ENCODE measurements at regions of chr22 and their contacts with region 1.

Region 1: DNA sequence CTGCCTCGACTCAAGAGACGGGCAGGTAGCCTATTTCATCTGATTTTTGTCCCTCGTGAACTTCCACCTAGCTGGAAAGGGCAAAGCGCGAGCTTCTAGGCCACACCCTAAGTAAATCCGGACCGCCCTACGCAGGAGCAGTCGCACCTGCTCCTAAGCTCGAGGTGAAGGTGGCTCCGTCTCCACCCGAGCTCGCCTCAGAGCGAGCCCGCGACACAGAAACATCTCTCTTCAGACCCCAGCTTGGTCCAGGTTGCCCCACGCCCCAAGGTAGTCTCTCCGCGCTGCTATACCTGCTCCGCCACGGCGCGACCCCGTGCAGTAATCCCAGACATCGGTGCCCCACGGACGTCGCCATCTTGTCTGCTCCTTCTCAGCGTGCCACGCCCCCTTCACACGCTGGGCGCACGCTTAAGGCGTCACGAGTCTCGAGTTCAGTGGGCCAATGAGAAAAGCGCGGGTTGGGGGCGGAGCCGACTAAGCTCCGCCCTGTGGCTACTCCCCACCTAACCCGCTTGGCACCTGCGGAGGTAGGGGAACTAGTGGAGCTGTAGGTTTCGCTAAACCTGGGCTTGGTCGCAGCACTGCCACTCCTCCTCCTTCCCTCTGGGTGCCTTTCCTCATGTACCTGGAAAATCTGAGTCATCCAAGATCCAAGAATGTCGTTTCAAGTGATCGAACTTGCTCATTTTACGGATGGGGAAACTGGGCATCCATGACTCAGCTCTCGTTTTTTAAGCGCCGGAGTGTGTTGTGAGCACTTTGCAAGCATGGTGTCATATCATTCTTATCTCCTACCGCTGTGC is at the start of gene PISD:
- DNase-seq: peak; percentile 96 to 99
- ATAC-seq: peak; percentile 96 to 100 (median 99)
- H3K4me3 ChIP-seq: peak within 1 kb of the TSS; percentile 84
- H3K4me3 Mint-ChIP-seq: peak within 1 kb of the TSS; percentile 100
- H3K27ac ChIP-seq: peak within 1 kb of the TSS; percentile 51
- H3K27ac Mint-ChIP-seq: peak within 1 kb of the TSS; percentile 98 to 99
- H3K4me1 ChIP-seq: peaks cover 28% of the 10 kb centered on the region
- H3K4me1 Mint-ChIP-seq: peaks cover 24 to 25% of the 10 kb centered on the region in 2 donors
- H3K27me3 ChIP-seq: no peaks in the 10 kb centered on the region
- H3K27me3 Mint-ChIP-seq: no peaks in the 10 kb centered on the region
- CTCF ChIP-seq: no peak
- total RNA-seq, gene PISD: 36.0 to 52.1 (median 47.8) TPM

Region 2: DNA sequence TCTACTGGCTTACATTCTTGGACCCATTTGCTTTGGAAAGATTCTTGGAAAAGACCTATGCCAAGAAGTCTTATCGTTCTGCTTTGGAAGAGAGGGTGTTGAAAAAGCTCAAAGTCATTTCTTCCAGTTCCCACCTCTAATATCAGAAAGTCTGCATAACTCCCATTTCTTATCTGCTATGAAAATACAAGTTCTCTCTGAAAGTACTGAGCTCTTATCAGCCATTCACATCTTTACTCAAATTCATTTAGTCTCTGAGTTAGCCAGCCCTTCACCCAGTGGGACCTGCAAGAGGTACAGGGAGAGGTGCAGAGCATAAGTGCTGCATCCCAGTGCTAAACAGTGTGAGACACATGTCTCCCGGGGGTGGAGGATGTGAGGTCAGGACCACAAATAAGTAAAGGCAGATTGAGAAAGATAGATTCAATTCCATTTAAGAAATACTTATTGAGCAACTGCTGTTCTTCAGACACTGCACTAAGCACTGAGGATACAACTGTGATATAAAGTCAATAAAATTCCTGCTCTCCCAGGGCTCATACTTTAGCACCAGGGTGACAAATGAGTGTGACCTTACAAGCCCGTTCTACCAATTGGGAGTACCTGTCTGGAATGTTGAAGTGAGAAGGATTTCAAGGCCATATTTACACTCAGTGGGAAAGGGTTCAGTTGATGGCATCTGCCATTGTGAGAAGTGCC is 76.7 kb before region 1 on chr22:
- intact Hi-C with region 1: no loop called
- DNase-seq: peak in 1 of 2 donors; percentile 19
- ATAC-seq: no peak
- H3K4me3 ChIP-seq: no peak overlapping the region
- H3K4me3 Mint-ChIP-seq: no peak overlapping the region
- H3K27ac ChIP-seq: no peak overlapping the region
- H3K27ac Mint-ChIP-seq: no peak overlapping the region
- H3K4me1 ChIP-seq: peaks cover 2% of the 10 kb centered on the region
- H3K4me1 Mint-ChIP-seq: peaks cover 0 to 10% of the 10 kb centered on the region in 2 donors
- H3K27me3 ChIP-seq: no peaks in the 10 kb centered on the region
- H3K27me3 Mint-ChIP-seq: no peaks in the 10 kb centered on the region
- CTCF ChIP-seq: no peak

Region 3: DNA sequence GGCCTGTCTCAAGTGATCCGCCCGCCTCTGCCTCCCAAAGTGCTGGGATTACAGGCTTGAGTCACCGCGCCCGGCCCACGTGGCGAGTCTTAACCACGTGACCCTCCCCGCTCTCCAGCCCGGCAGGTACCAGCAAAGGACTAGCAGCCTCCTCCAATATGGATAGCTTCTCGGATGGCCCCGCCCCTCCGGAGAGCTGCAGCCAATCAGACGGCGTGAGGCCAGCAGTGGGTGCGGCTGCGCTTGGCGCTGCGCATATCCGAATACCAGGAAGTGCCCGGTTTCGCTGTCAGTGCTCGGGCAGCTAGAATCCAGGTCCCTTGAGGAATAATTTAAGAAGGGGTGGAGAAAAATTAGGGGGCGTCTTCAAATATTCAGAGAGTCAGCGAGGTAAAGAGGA is 14.6 kb after region 1 on chr22:
- intact Hi-C with region 1: loop called (anchors 1 kb)
- DNase-seq: peak; percentile 89 to 94
- ATAC-seq: peak; percentile 100
- H3K4me3 ChIP-seq: peak overlapping the region; percentile 46
- H3K4me3 Mint-ChIP-seq: peak overlapping the region; percentile 100
- H3K27ac ChIP-seq: peak overlapping the region; percentile 60
- H3K27ac Mint-ChIP-seq: peak overlapping the region; percentile 92 to 97
- H3K4me1 ChIP-seq: peaks cover 11% of the 10 kb centered on the region
- H3K4me1 Mint-ChIP-seq: peaks cover 12 to 18% of the 10 kb centered on the region in 2 donors
- H3K27me3 ChIP-seq: no peaks in the 10 kb centered on the region
- H3K27me3 Mint-ChIP-seq: no peaks in the 10 kb centered on the region
- CTCF ChIP-seq: no peak

Region 4: GRCh38 chr22:31749636-31750364 is 87.7 kb after region 1 on chr22 and contains the start of gene PRR14L:
- intact Hi-C with region 1: loop called (anchors 2 kb)
- DNase-seq: peak; percentile 97 to 99
- ATAC-seq: peak; percentile 76 to 93 (median 79)
- H3K4me3 ChIP-seq: peak within 1 kb of the TSS; percentile 92
- H3K4me3 Mint-ChIP-seq: peak within 1 kb of the TSS; percentile 98
- H3K27ac ChIP-seq: peak within 1 kb of the TSS; percentile 81
- H3K27ac Mint-ChIP-seq: peak within 1 kb of the TSS; percentile 87 to 89
- H3K4me1 ChIP-seq: peaks cover 42% of the 10 kb centered on the region
- H3K4me1 Mint-ChIP-seq: peaks cover 47 to 56% of the 10 kb centered on the region in 2 donors
- H3K27me3 ChIP-seq: no peaks in the 10 kb centered on the region
- H3K27me3 Mint-ChIP-seq: no peaks in the 10 kb centered on the region
- CTCF ChIP-seq: no peak
- total RNA-seq, gene PRR14L: 39.3 to 54.1 (median 54.0) TPM

Region 5: DNA sequence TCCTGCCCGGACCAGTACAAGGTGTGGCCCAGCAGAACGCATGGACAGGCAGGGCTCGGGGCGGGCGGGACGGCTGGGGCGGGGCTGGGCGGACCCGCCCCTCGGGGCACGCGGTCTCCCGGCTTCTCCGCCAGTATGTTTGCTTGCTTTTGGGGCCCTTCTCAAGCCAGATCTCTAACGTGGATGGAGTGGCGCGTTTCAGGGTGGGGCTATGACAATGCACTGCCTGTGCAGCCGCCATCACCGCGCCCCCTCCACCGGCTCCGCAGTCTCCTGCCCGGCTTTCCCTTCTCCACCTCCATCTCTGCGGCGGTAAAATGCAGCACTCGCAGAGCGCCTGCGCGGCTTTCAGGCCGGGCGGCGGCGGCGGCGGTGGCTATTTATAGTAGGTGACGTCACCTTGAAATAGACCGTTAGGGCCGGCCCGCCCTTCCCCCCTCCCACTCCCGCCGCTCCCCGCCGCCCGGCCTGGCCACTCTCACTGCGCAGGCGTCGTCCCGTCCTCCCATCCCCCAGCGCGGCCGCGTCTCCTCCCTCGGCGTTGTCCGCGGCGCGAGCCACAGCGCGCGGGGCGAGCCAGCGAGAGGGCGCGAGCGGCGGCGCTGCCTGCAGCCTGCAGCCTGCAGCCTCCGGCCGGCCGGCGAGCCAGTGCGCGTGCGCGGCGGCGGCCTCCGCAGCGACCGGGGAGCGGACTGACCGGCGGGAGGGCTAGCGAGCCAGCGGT is 282.1 kb after region 1 on chr22 and contains the start of gene YWHAH:
- intact Hi-C with region 1: loop called (anchors 1 kb)
- DNase-seq: peak; percentile 82 to 91
- ATAC-seq: peak; percentile 75 to 88 (median 80)
- H3K4me3 ChIP-seq: peak within 1 kb of the TSS; percentile 58
- H3K4me3 Mint-ChIP-seq: peak within 1 kb of the TSS; percentile 92
- H3K27ac ChIP-seq: peak within 1 kb of the TSS; percentile 81
- H3K27ac Mint-ChIP-seq: peak within 1 kb of the TSS in 1 of 2 donors; percentile 82
- H3K4me1 ChIP-seq: peaks cover 27% of the 10 kb centered on the region
- H3K4me1 Mint-ChIP-seq: peaks cover 7 to 14% of the 10 kb centered on the region in 2 donors
- H3K27me3 ChIP-seq: no peaks in the 10 kb centered on the region
- H3K27me3 Mint-ChIP-seq: no peaks in the 10 kb centered on the region
- CTCF ChIP-seq: no peak
- total RNA-seq, gene YWHAH: 29.6 to 35.0 (median 32.8) TPM

Region 6: DNA sequence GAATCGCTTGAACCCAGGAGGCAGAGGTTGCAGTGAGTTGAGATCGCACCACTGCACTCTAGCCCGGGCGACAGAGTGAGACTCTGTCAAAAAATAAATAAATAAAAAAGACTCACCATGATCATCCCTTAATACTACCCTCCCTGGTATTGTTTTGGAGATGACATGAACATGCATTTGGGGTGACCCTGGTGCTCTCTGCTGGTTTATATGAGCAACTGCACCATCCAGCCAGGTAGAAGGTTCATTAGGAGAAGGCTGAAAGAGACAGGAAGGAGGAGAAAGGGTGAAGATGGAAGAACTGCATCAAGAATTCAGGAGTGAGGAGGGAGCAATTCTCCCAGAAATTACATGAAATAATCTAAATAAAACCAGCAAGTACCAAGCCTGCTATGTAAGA is 418.9 kb after region 1 on chr22:
- intact Hi-C with region 1: loop called (anchors 5 kb)
- DNase-seq: peak in 1 of 2 donors; percentile 66
- ATAC-seq: peak in 1 of 3 donors; percentile 50
- H3K4me3 ChIP-seq: no peak overlapping the region
- H3K4me3 Mint-ChIP-seq: no peak overlapping the region
- H3K27ac ChIP-seq: no peak overlapping the region
- H3K27ac Mint-ChIP-seq: no peak overlapping the region
- H3K4me1 ChIP-seq: no peaks in the 10 kb centered on the region
- H3K4me1 Mint-ChIP-seq: no peaks in the 10 kb centered on the region
- H3K27me3 ChIP-seq: no peaks in the 10 kb centered on the region
- H3K27me3 Mint-ChIP-seq: peaks cover 8 to 16% of the 10 kb centered on the region in 2 donors
- CTCF ChIP-seq: peak; percentile 36

Region 7: DNA sequence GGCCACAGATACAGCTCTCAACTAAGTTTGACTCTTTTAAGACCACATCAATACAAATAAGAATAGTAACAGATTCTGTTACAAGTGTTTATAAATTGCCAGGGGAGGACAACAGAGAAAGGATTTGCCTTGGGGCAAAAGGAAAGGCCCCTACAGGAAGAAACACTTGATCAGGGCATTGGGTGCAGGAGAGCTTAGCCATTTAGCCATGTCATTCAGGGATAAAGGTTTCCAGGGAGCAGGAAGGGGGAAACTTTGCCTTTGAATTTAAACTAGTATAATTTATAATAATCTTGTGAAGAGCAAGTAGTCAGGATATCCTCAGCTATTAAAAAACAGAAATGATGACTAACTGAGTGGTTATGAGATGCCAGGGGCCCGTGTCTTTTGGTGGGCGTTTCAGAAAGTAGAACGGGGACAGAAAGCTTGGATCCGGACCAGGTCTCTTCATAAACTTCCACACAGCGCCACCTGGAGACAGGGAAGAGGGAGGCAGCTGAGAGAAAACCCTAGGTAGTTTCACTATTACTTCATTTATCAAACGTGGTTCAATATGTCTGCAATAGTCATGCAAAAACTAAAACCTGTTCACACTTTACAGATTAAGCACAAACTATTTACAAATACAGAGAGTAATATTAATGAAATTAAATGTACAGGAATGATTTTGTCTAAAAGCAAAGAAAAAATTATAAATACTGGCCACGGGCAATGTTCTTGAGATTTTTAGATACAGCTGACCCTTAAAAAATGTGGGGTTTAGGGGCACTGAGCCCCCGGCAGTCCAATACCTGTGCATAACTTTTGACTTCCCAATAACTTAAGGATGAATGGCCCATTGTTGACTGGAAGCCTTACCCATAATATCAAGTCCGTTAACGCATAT is 604.1 kb after region 1 on chr22:
- intact Hi-C with region 1: loop called (anchors 5 kb)
- DNase-seq: peak; percentile 39 to 82
- ATAC-seq: peak; percentile 54 to 81 (median 60)
- H3K4me3 ChIP-seq: no peak overlapping the region
- H3K4me3 Mint-ChIP-seq: no peak overlapping the region
- H3K27ac ChIP-seq: no peak overlapping the region
- H3K27ac Mint-ChIP-seq: no peak overlapping the region
- H3K4me1 ChIP-seq: peaks cover 3% of the 10 kb centered on the region
- H3K4me1 Mint-ChIP-seq: peaks cover 6 to 8% of the 10 kb centered on the region in 2 donors
- H3K27me3 ChIP-seq: no peaks in the 10 kb centered on the region
- H3K27me3 Mint-ChIP-seq: peaks cover 0 to 6% of the 10 kb centered on the region in 2 donors
- CTCF ChIP-seq: peak; percentile 87